ENCODE measurements at regions of chr11 and their contacts with region 1.

Region 1: DNA sequence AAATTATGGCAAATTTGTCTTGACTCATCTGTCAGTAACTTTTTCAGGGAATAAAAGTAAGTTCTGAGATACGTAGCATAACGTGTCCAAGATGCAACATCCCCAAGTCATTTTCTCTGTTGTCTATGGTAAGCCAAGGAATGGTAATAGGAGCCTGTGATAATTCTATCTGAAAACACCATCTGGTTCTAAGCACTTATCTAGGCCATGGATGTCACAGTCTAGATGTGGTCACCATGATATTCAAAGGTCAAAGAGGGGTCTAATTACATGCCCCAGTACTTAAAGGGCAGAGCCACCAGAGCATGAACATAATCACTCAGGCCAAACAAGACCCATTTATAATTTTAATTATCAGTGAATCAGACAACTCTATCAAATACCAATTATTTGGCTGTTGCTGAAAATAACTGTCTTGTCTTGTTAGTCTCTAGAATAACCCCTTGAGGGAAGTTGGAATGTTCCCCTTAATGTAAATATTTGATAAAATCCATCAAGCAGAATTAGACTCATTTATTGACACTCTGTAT is 225.1 kb upstream of the MPPED2 start:
- DNase-seq: no peak
- ATAC-seq: no peak

Region 2: GRCh38 chr11:30594646-30595411 is 216.5 kb before region 1 on chr11:
- intact Hi-C with region 1: loop called (anchors 5 kb)
- DNase-seq: no peak
- ATAC-seq: no peak

Measured in Right ventricle myocardium inferior (tissue), 1 donor.